Activated CD8-positive, alpha-beta T cell treated with anti-CD3 and anti-CD28 coated beads, Interleukin-2, amount 10 ng/mL, durations not matched to agents 7 days and 5 days (primary cell): ENCODE measurements at regions of chr17 and their contacts with region 1.

Region 1: GRCh38 chr17:43316522-43317142 is 82.2 kb upstream of the ARL4D start:
- DNase-seq: peak; percentile 40
- ATAC-seq: no peak
- H3K4me3 Mint-ChIP-seq: peak overlapping the region; percentile 15
- H3K27ac Mint-ChIP-seq: peak overlapping the region; percentile 67
- H3K4me1 Mint-ChIP-seq: peaks cover 18% of the 10 kb centered on the region
- H3K27me3 Mint-ChIP-seq: no peaks in the 10 kb centered on the region

Region 2: DNA sequence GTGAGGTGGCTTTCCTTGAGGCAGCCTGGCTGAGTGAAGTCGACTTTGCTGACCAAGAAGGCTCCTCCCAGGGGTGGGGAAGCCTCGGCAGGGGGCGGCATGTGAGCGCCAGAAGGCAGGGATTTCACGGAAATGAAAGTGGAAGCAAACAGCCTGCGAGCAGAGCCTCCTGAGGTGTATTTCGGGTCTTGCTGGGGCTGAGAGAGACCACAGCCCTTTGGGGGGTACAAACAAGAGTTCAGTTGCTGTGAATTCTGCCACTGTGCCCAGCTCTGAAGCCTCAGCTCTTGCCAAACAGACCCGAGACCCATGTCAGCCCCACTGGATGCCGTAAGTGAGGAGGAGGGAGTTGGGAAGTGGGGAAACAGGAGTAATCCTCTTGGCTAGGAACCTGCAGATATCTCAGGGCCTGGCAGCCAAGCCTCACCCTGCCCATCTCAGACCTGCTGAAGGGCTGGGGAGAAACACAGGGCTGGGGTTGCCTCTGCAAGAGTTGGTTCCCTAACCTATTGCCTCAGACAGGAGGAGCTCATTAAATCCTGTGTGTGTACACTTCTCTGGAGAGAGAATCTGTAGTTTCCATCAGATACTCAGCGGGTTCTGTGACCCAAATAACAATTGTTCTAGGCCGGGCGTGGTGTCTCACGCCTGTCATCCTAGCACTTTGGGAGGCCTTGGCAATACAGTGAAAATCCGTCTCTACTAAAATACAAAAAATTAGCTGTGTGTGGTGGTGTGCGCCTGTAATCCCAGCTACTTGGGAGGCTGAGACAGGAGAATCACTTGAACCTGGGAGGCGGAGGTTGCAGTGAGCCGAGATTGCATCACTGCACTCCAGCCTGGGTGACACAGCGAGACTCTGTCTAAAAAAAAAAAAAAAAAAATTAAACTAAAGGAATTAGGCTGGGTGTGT is 309.7 kb before region 1 on chr17 and contains the start of gene IFI35:
- CTCF ChIA-PET with region 1: no interaction called
- POLR2A ChIA-PET with region 1: interaction called, 14 read pairs
- DNase-seq: peak; percentile 94
- ATAC-seq: peak; percentile 97
- H3K4me3 Mint-ChIP-seq: peak within 1 kb of the TSS; percentile 100
- H3K27ac Mint-ChIP-seq: peak within 1 kb of the TSS; percentile 100
- H3K4me1 Mint-ChIP-seq: peaks cover 22% of the 10 kb centered on the region
- H3K27me3 Mint-ChIP-seq: no peaks in the 10 kb centered on the region
- total RNA-seq, gene IFI35: 107 to 110 TPM

Region 3: DNA sequence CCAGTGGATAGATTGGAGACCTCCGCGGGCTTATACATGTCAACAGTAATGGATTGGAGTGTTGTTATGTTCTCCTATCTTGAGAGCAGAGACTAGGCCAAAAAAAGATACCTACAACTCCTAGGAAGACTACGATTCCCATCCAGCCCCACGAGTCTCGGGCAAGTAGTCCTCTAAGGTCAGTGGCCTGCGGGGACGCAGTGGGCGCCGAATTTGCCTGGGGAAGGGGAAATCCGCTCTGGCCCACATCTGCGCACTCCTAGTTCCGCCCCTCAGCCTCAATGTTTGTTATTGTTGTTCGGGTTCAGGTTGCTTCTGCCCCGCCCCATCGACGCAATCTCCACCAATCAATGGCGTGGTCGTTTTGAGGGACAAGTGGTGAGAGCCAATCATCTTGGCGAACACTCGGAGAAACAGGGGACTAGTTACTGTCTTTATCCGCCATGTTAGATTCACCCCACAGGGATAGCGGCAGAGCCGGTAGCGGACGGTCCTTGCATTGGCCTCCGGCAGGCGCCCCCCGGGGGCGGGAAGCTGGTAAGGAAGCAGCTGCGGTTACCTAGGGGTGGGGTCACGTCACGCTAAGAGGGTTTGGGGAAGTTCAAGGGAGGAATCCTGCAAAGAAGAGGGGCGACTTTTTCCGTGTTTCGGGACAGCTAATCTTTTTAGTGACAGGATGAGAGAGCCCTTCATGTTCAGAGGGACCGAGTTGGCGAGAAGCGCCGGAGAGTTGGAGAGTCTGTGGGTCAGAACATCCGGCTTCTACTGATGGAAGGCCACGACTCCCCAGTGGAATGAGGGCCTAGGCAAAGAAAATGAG is 145.7 kb before region 1 on chr17 and contains the start of gene NBR1:
- CTCF ChIA-PET with region 1: no interaction called
- POLR2A ChIA-PET with region 1: interaction called, 49 read pairs
- DNase-seq: peak; percentile 98
- ATAC-seq: peak; percentile 88
- H3K4me3 Mint-ChIP-seq: no peak within 1 kb of the TSS
- H3K27ac Mint-ChIP-seq: no peak within 1 kb of the TSS
- H3K4me1 Mint-ChIP-seq: peaks cover 35% of the 10 kb centered on the region
- H3K27me3 Mint-ChIP-seq: no peaks in the 10 kb centered on the region
- total RNA-seq, gene NBR1: 40.9 to 41.3 TPM

Region 4: DNA sequence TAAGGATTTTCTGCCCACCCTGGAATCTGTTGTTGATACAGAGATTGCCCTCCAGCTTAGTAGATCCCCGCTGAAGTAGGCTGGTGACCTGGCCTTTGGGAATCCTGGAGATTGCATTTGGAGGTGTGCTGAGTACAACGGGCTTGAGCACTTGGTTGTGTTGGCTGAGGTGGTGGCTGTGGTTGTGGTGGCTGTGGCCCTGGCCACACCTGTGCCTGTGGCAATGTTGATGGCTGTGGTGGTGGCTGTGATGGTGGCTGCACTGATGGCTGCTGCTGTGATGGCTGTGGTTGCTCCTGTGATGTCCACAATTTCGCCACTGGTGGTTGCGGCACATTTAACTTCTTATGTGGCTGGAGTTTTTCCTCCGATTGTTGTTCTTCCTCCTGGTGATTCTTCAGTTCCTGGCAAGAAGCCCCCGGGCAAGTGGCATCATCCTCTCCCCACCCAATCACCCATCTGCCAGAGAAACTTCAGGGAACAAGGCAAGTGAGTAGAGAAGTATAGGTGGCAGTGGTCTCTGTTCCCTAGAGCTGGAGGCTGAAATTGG is 92.4 kb before region 1 on chr17:
- CTCF ChIA-PET with region 1: interaction called, 3 read pairs
- POLR2A ChIA-PET with region 1: interaction called, 253 read pairs
- DNase-seq: no peak
- ATAC-seq: no peak
- H3K4me3 Mint-ChIP-seq: no peak overlapping the region
- H3K27ac Mint-ChIP-seq: no peak overlapping the region
- H3K4me1 Mint-ChIP-seq: peaks cover 8% of the 10 kb centered on the region
- H3K27me3 Mint-ChIP-seq: no peaks in the 10 kb centered on the region

Region 5: DNA sequence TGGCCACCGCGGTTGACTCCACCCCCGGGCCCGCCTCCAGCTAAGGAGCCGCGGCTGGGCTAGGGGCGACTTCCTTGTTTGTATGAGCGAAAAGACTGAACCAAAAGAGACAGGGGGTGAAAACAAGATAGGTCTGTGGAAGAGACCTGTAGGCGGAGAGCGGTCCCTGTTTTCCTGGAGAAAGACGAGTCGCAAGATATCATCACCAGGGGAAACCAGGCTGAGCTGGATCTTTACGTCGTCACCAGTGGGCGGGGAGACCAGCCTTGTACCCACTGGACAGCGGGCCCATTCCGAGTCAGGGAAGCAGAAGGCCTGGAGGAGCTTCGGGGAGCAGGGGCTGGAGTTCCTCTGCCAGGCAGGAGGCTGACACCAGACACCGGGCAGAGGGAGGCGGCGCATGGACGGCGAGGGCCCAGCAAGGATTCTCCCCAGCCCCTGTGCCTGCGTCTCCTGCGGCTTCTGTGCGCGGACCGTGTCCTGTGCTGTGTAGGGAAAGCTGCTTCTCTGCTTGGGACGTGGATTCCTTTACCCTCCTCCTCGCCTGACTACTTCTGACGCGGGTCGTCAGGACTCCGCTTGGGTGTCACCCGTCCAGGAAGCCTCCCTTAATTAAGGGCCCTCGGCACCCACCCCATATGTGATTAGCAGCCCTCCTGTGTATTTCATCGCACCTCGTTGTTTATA is 71.9 kb after region 1 on chr17:
- CTCF ChIA-PET with region 1: no interaction called
- POLR2A ChIA-PET with region 1: interaction called, 17 read pairs
- DNase-seq: peak; percentile 92
- ATAC-seq: peak; percentile 77
- H3K4me3 Mint-ChIP-seq: peak overlapping the region; percentile 82
- H3K27ac Mint-ChIP-seq: peak overlapping the region; percentile 95
- H3K4me1 Mint-ChIP-seq: peaks cover 27% of the 10 kb centered on the region
- H3K27me3 Mint-ChIP-seq: no peaks in the 10 kb centered on the region